ENCODE measurements at regions of chr5 and their contacts with region 1.

Region 1: GRCh38 chr5:140401362-140402257 is at the start of gene ANKHD1:
- DNase-seq: peak; percentile 99
- H3K4me3 Mint-ChIP-seq: no peak within 1 kb of the TSS
- H3K27ac Mint-ChIP-seq: no peak within 1 kb of the TSS
- H3K4me1 Mint-ChIP-seq: peaks cover 27% of the 10 kb centered on the region
- H3K27me3 Mint-ChIP-seq: no peaks in the 10 kb centered on the region
- total RNA-seq, gene ANKHD1: 118 and 121 TPM in 2 replicates

Region 2: GRCh38 chr5:140107312-140108083 is 294.1 kb before region 1 on chr5:
- intact Hi-C with region 1: loop called (anchors 5 kb)
- DNase-seq: peak; percentile 97
- H3K4me3 Mint-ChIP-seq: peak overlapping the region; percentile 98
- H3K27ac Mint-ChIP-seq: peak overlapping the region; percentile 96
- H3K4me1 Mint-ChIP-seq: peaks cover 32% of the 10 kb centered on the region
- H3K27me3 Mint-ChIP-seq: peaks cover 61% of the 10 kb centered on the region

Region 3: DNA sequence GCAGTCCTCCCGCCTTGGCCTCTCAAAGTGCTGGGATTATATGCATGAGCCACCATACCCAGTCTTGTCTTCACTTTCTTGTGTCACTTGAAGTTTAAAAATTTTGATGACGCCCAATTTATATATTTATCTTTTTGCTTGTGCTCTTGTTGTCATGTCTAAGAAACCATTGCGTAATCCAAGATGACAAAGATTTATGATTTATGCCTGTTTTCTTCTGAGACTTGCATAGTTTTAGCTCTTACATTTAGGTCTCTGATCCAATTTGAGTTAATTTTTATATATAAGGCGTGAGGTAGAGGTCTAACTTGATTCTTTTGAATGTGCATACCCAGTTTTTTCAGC is 18.6 kb after region 1 on chr5:
- intact Hi-C with region 1: loop called (anchors 2 kb)
- DNase-seq: no peak
- H3K4me3 Mint-ChIP-seq: peak overlapping the region; percentile 22
- H3K27ac Mint-ChIP-seq: no peak overlapping the region
- H3K4me1 Mint-ChIP-seq: peaks cover 30% of the 10 kb centered on the region
- H3K27me3 Mint-ChIP-seq: no peaks in the 10 kb centered on the region

Region 4: GRCh38 chr5:140564196-140565023 is 162.8 kb after region 1 on chr5 and contains the starts of genes APBB3 and SLC35A4:
- intact Hi-C with region 1: loop called (anchors 1 kb)
- DNase-seq: peak; percentile 99
- H3K4me3 Mint-ChIP-seq: peak within 1 kb of the TSS; percentile 93
- H3K27ac Mint-ChIP-seq: peak within 1 kb of the TSS; percentile 95
- H3K4me1 Mint-ChIP-seq: peaks cover 53% of the 10 kb centered on the region
- H3K27me3 Mint-ChIP-seq: no peaks in the 10 kb centered on the region
- total RNA-seq, gene APBB3: 16.5 and 17.8 TPM in 2 replicates
- total RNA-seq, gene SLC35A4: 105 and 106 TPM in 2 replicates

Region 5: DNA sequence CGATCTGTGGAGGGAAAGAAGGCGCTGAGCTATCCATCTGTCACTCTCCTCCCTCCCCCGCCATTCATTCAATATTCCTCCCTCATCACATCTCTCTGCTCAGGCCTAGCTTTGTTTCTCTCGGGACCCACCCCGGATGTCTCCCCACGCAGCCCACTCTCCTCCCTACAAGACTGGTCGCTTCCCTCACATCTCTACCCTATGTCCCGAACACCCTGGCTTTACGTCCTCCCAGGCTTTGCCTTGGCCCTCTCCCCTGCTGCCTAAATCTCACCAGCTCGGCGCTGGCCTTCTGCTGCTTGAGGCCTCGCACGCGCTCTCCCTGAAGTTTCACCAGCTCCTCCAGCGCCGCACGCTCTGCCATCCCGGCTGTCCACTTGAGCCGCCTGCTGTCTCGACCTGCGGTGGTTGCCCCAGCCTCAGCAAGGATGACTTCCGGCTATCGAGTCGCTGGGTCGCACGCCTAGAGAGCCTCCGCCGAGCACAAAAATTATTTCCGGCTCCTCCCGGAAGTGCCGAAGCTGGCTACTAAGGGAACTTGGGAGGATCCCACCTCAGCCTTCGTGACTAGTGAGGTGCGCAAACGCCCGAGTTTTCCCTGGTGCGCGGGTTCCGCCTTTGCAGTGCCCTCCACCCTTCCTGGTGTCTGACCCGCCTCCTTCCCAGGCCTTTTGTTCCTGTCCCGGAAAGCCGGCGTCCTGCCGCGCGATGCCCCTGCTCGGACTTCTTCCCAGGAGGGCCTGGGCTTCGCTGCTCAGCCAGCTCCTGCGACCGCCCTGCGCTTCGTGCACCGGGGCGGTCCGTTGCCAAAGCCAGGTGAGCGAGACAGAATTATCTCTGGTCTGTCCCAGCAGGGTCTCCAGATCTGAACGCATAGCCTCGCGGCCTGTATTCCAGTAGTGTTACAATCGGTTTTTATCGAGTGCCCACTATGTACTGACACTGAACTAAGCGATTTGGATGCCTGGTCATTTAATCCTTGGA is 289.6 kb after region 1 on chr5 and contains the starts of genes HARS1 and HARS2:
- intact Hi-C with region 1: loop called (anchors 1 kb)
- DNase-seq: peak; percentile 96
- H3K4me3 Mint-ChIP-seq: peak within 1 kb of the TSS; percentile 98
- H3K27ac Mint-ChIP-seq: peak within 1 kb of the TSS; percentile 98
- H3K4me1 Mint-ChIP-seq: peaks cover 30% of the 10 kb centered on the region
- H3K27me3 Mint-ChIP-seq: no peaks in the 10 kb centered on the region
- total RNA-seq, gene HARS1: 109 and 115 TPM in 2 replicates
- total RNA-seq, gene HARS2: 28.0 and 29.6 TPM in 2 replicates